CD4-positive, alpha-beta memory T cell (primary cell): ENCODE measurements at regions of chr6 and their contacts with region 1.

Region 1: DNA sequence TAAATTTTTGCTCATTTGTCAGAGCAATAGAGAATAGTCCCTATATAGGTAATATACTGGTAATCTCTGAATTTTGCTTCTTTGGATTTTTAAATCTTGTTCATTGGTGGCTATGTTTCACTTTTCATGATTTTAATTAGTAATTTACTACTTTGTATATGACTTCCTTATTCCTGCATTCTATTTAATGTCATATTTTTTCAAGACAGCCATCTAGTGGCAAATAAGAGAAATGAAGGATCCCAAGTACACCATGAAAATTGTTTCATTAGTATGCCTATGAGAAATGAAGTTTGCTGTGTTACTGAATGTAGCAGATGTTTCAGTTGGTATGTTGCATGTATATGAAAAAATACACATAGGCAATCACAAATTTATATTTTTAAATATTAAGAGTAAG is 82.4 kb downstream of the ZNF292 start:
- DNase-seq: peak in 4 of 5 donors; percentile 15 to 33 (median 23)
- H3K4me3 ChIP-seq: no peak overlapping the region
- H3K4me3 Mint-ChIP-seq: no peak overlapping the region
- H3K27ac ChIP-seq: no peak overlapping the region
- H3K27ac Mint-ChIP-seq: peak overlapping the region in 1 of 7 donors; percentile 29
- H3K4me1 ChIP-seq: no peaks in the 10 kb centered on the region
- H3K4me1 Mint-ChIP-seq: peaks cover 0 to 8% (median 5%) of the 10 kb centered on the region in 4 donors
- H3K27me3 ChIP-seq: no peaks in the 10 kb centered on the region
- H3K27me3 Mint-ChIP-seq: no peaks in the 10 kb centered on the region

Region 2: GRCh38 chr6:87066449-87067333 is 171.1 kb before region 1 on chr6:
- CTCF ChIA-PET with region 1: no interaction called
- POLR2A ChIA-PET with region 1: no interaction called
- intact Hi-C with region 1: loop called (anchors 5 kb)
- DNase-seq: peak in 4 of 5 donors; percentile 24 to 40 (median 34)
- H3K4me3 ChIP-seq: no peak overlapping the region
- H3K4me3 Mint-ChIP-seq: peak overlapping the region in 4 of 8 donors; percentile 19 to 51 (median 44)
- H3K27ac ChIP-seq: no peak overlapping the region
- H3K27ac Mint-ChIP-seq: peak overlapping the region in 2 of 7 donors; percentile 26 to 43
- H3K4me1 ChIP-seq: no peaks in the 10 kb centered on the region
- H3K4me1 Mint-ChIP-seq: no peaks in the 10 kb centered on the region
- H3K27me3 ChIP-seq: no peaks in the 10 kb centered on the region
- H3K27me3 Mint-ChIP-seq: peaks cover 1 to 12% of the 10 kb centered on the region in 2 donors

Region 3: GRCh38 chr6:87139236-87139635 is 98.6 kb before region 1 on chr6:
- CTCF ChIA-PET with region 1: interaction called, 73 read pairs
- POLR2A ChIA-PET with region 1: no interaction called
- intact Hi-C with region 1: loop called (anchors 1 kb)
- DNase-seq: peak; percentile 50 to 71 (median 68)
- H3K4me3 ChIP-seq: no peak overlapping the region
- H3K4me3 Mint-ChIP-seq: no peak overlapping the region
- H3K27ac ChIP-seq: no peak overlapping the region
- H3K27ac Mint-ChIP-seq: peak overlapping the region in 1 of 7 donors; percentile 80
- H3K4me1 ChIP-seq: no peaks in the 10 kb centered on the region
- H3K4me1 Mint-ChIP-seq: peaks cover 0 to 4% (median 3%) of the 10 kb centered on the region in 4 donors
- H3K27me3 ChIP-seq: no peaks in the 10 kb centered on the region
- H3K27me3 Mint-ChIP-seq: peaks cover 5 to 6% of the 10 kb centered on the region in 2 donors